ENCODE measurements at regions of chr4 and their contacts with region 1.

Region 1: DNA sequence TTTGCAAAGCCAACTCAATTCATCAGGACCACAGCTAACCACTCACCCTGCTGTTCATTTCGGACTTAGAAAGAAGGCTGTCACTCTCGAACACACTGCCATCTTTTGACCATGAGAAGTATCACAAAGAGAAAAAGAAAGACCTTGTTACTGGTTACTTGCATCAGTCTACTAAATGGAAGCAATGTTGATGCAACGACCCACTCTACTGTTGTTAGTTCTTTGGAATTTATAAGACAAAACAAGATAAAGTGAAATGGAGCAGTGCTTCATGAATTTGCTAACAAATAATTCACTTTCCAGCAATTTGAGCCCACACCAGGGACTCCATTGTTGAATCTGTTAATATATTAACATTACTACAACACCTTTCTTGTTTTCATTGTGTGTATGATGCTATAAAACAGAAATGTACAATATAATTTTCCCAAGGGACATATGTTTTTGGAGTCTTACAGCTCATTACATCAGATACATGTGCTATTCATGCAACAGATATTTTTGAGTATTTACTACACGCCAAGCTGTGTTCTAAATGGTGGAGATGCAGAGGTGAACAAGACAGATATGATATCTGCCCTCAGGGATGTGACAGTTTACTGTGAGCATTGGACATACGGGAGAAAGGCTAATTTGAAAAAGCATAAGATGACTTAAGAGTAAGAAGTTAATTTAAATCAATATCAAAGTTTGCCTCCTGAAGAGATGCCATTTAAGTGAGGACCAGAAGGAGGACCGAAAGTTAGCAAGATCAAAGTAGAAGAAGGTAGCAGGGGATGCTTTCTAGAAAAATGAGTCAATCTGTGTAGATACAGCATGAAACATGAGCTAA is 87.2 kb downstream of the AREG start:
- DNase-seq: no peak
- H3K4me3 Mint-ChIP-seq: no peak overlapping the region
- H3K27ac Mint-ChIP-seq: no peak overlapping the region
- H3K4me1 Mint-ChIP-seq: no peaks in the 10 kb centered on the region
- H3K27me3 Mint-ChIP-seq: peaks cover under 1% of the 10 kb centered on the region

Region 2: GRCh38 chr4:74320559-74321118 is 211.5 kb before region 1 on chr4:
- CTCF ChIA-PET with region 1: interaction called, 12 read pairs
- DNase-seq: peak; percentile 38
- H3K4me3 Mint-ChIP-seq: no peak overlapping the region
- H3K27ac Mint-ChIP-seq: no peak overlapping the region
- H3K4me1 Mint-ChIP-seq: no peaks in the 10 kb centered on the region
- H3K27me3 Mint-ChIP-seq: peaks cover 14% of the 10 kb centered on the region

Region 3: DNA sequence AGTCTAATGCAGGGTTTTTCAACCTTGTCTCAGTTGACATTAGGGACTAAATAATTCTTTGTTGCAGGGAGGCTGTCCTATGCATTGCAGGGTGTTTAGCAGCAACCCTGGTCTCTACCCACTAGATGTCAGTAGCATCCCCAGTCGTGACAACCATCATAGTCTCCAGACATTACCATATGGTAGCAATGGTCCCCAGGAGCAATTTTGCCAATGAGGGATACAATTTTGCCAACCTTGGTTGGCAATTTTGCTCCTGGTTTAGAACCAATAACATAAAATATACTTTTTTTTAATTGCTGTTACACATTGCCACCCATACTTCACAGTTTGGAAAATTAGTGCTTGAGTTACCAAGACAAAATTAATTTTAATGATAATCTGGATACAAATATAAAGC is 161.3 kb before region 1 on chr4:
- CTCF ChIA-PET with region 1: interaction called, 42 read pairs
- DNase-seq: peak; percentile 30
- H3K4me3 Mint-ChIP-seq: no peak overlapping the region
- H3K27ac Mint-ChIP-seq: no peak overlapping the region
- H3K4me1 Mint-ChIP-seq: no peaks in the 10 kb centered on the region
- H3K27me3 Mint-ChIP-seq: peaks cover 5% of the 10 kb centered on the region

Region 4: DNA sequence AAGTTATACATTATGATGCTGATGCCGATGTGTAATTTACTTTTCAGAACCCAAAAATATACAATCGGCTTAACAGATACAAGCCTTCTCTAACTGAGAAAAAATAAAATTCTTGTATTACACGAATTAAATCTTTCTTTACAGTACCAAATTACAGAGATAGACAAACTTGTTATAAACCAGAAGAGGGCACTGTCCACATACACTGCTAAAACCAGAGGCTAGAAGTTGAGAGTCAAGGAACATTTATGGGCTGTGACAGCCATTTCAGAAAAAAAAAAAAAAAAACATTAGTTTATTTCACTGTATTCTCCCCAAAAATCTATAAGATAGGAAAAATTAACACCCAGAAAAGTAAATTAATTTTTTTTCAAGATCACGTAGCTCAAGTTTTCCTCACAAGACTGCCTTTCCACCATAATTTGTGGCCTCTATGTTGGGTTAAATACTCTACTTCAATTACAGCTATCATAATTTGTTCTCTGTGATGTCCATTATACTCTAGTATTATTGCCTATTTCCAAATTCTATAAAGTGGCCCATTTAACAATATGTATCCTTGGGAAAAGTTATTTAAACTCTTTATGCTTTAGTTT is 155.2 kb before region 1 on chr4:
- CTCF ChIA-PET with region 1: interaction called, 42 read pairs
- DNase-seq: no peak
- H3K4me3 Mint-ChIP-seq: no peak overlapping the region
- H3K27ac Mint-ChIP-seq: no peak overlapping the region
- H3K4me1 Mint-ChIP-seq: no peaks in the 10 kb centered on the region
- H3K27me3 Mint-ChIP-seq: no peaks in the 10 kb centered on the region

Measured in activated naive CD4-positive, alpha-beta T cell treated with anti-CD3 and anti-CD28 coated beads, Interleukin-2, amount 10 ng/mL, durations not matched to agents 7 days and 5 days (primary cell).